ENCODE measurements at regions of chr5 and their contacts with region 1.

Region 1: GRCh38 chr5:14946815-14947640 is 75.5 kb upstream of the ANKH start:
- DNase-seq: peak in 7 of 9 donors; percentile 34 to 66 (median 56)
- ATAC-seq: peak; percentile 92
- H3K4me3 ChIP-seq: no peak overlapping the region
- H3K4me3 Mint-ChIP-seq: no peak overlapping the region
- H3K27ac ChIP-seq: no peak overlapping the region
- H3K27ac Mint-ChIP-seq: no peak overlapping the region
- H3K4me1 ChIP-seq: no peaks in the 10 kb centered on the region
- H3K4me1 Mint-ChIP-seq: peaks cover 0 to 9% (median 5%) of the 10 kb centered on the region in 7 donors
- H3K27me3 ChIP-seq: no peaks in the 10 kb centered on the region
- H3K27me3 Mint-ChIP-seq: peaks cover 0 to 5% (median 4%) of the 10 kb centered on the region in 5 donors

Region 2: DNA sequence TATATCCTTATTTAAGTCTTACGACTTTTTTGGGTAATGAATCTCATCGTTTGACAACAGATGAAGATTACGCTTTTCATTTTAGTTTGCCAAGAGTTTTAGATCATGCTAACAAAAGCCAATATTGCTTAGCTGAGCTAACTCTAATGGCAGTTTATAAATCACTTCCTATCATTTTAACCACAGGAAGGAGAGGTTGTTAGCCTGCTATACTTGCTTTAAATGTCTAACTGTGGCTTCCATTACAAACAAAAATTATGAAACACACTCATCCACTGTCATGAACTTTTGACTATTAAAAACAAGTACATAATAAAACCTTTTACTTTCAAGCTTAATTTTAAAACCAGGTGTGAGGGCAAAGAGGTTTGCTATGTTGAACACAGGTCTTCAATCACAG is 21.7 kb before region 1 on chr5:
- CTCF ChIA-PET with region 1: no interaction called
- POLR2A ChIA-PET with region 1: no interaction called
- intact Hi-C with region 1: no loop called
- DNase-seq: no peak
- ATAC-seq: no peak
- H3K4me3 ChIP-seq: no peak overlapping the region
- H3K4me3 Mint-ChIP-seq: peak overlapping the region in 7 of 10 donors; percentile 17 to 72 (median 54)
- H3K27ac ChIP-seq: no peak overlapping the region
- H3K27ac Mint-ChIP-seq: peak overlapping the region; percentile 53 to 83 (median 78)
- H3K4me1 ChIP-seq: peaks cover 11 to 14% of the 10 kb centered on the region in 2 donors
- H3K4me1 Mint-ChIP-seq: peaks cover 6 to 38% (median 26%) of the 10 kb centered on the region in 7 donors
- H3K27me3 ChIP-seq: no peaks in the 10 kb centered on the region
- H3K27me3 Mint-ChIP-seq: no peaks in the 10 kb centered on the region

Region 3: DNA sequence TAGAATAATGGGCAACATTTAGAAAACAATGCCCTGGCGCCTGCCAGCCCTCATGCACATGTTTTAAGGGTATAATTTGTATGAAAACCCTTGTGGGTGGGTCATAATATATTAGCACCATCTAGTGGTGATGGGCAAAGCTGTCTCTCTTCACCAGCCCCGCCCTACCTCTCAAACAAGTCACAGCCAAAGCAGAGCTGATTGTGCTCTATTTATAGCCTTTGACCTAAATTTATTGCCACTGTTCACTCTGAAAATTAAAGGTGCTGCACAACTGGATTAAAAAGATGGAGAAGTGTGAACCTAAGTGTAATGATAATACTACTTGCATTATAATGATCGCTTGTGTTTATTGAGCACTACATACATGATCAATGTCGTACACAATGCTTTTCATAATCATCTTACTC is 56.5 kb after region 1 on chr5:
- CTCF ChIA-PET with region 1: interaction called, 9 read pairs
- POLR2A ChIA-PET with region 1: no interaction called
- intact Hi-C with region 1: loop called (anchors 1 kb)
- DNase-seq: peak; percentile 10 to 77 (median 69)
- ATAC-seq: peak; percentile 96
- H3K4me3 ChIP-seq: no peak overlapping the region
- H3K4me3 Mint-ChIP-seq: no peak overlapping the region
- H3K27ac ChIP-seq: no peak overlapping the region
- H3K27ac Mint-ChIP-seq: peak overlapping the region in 1 of 9 donors; percentile 33
- H3K4me1 ChIP-seq: no peaks in the 10 kb centered on the region
- H3K4me1 Mint-ChIP-seq: peaks cover 0 to 20% (median 0%) of the 10 kb centered on the region in 7 donors
- H3K27me3 ChIP-seq: peaks cover 0 to 3% of the 10 kb centered on the region in 2 donors
- H3K27me3 Mint-ChIP-seq: peaks cover 0 to 38% (median 0%) of the 10 kb centered on the region in 5 donors

Region 4: DNA sequence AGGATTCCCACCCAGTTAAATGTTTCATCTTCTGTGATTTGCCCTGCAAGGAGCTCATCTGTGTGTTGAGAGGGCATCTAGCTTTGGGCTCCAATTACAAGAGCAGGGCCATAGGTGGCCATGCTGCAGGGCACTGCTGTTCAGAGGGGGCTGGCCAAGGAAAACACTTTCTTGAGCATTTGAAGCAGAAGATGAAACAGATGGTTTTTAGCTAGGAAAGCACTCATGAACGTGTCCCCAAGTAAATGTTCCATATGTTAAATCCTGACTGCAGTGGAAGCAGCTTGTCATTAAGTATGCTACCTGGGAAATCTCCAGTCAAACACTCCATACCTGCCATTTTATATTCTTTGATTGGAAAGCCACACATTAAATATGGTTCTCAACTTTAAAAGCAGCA is 729.6 kb after region 1 on chr5:
- CTCF ChIA-PET with region 1: no interaction called
- POLR2A ChIA-PET with region 1: no interaction called
- intact Hi-C with region 1: no loop called
- DNase-seq: no peak
- ATAC-seq: no peak
- H3K4me3 ChIP-seq: no peak overlapping the region
- H3K4me3 Mint-ChIP-seq: no peak overlapping the region
- H3K27ac ChIP-seq: no peak overlapping the region
- H3K27ac Mint-ChIP-seq: no peak overlapping the region
- H3K4me1 ChIP-seq: no peaks in the 10 kb centered on the region
- H3K4me1 Mint-ChIP-seq: no peaks in the 10 kb centered on the region
- H3K27me3 ChIP-seq: no peaks in the 10 kb centered on the region
- H3K27me3 Mint-ChIP-seq: no peaks in the 10 kb centered on the region